OCI-LY7 (cell line): ENCODE measurements at regions of chr7 and their contacts with region 1.

Region 1: DNA sequence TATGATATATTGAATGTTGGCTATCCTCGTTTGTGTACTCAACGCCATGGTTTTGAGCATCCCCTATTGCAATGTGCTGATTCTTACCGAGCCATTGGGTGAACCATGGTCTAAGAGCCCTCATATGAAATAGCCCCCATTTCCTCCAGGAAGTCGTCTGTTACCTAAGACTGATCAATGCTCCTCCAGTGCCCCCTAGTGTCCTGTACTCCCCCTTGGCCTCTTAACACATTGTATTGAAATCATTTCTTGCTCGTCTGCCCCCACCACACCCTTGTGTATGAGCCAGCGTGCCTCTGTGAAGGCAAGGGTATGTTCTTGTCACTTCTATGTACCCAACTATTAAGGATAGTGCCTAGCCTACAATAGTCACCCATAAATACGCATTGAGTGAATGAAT is 11.2 kb upstream of the SLC35B4 start:
- DNase-seq: peak; percentile 84
- H3K4me3 ChIP-seq: no peak overlapping the region
- H3K27ac ChIP-seq: no peak overlapping the region
- H3K4me1 ChIP-seq: no peaks in the 10 kb centered on the region
- CTCF ChIP-seq: peak; percentile 91

Region 2: DNA sequence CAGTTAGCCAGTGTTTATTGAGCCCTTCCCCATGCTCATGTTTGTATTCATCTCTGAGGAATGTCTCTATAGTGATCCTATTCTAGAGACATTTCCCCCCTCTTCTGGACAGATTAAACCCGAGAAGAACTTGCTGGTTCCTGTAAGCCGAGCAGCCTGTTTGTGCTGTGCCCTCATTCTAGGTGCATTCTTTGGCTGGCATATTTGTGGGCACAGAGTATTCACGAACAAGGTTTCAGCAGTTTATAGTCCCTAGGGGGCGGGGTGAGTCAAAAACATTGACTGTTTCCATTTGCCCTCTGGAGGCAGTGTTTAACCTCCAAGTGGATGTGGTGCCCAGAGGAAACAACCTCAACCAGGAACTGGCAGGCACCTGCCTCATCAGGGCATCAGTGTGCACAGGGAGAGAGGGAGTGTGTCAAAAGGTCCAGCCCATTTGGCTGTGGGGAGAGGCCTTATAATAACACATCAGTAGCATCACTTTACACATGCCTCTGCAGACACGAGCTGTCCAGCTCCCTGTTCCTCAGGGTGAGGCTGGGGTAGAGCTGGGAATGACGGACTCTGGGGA is 474.1 kb before region 1 on chr7:
- CTCF ChIA-PET with region 1: interaction called, 3 read pairs
- POLR2A ChIA-PET with region 1: no interaction called
- intact Hi-C with region 1: loop called (anchors 10 kb)
- DNase-seq: peak; percentile 63
- H3K4me3 ChIP-seq: no peak overlapping the region
- H3K27ac ChIP-seq: no peak overlapping the region
- H3K4me1 ChIP-seq: no peaks in the 10 kb centered on the region
- CTCF ChIP-seq: peak; percentile 79

Region 3: DNA sequence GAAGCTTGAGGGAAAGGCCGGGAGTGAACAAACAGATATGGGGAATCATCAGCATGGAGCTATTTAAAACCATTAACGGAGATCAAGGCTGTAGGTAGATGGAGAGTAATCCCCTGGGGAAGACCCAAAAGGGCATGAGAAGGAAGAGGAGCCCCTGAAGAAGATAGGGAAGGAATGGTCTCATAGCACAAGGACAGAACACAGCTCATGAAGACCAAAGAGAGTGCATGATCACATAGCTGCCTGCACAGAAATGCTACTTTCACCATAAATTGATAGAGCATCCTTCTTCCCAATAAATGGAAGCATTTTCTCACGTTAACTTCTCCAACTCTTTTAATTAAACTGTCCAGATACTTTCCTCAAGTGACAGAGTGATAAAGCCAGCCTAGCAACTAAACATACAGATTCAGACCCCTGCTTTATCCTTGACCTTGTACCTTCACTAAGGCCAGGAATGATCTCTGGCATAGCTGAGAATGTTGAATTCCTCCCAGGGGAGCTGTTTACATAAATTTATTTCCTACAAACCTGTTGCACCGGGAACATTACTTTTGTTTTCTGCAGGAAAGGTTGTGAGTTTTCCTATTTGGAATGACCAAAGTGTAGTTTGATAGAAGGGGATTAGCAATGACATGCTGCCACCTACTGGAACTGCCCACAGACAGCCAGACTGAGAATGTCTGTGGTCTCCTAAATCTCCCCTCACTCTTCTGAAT is 311.5 kb before region 1 on chr7:
- CTCF ChIA-PET with region 1: no interaction called
- POLR2A ChIA-PET with region 1: no interaction called
- intact Hi-C with region 1: loop called (anchors 5 kb)
- DNase-seq: peak; percentile 17
- H3K4me3 ChIP-seq: no peak overlapping the region
- H3K27ac ChIP-seq: no peak overlapping the region
- H3K4me1 ChIP-seq: no peaks in the 10 kb centered on the region
- CTCF ChIP-seq: peak; percentile 86

Region 4: DNA sequence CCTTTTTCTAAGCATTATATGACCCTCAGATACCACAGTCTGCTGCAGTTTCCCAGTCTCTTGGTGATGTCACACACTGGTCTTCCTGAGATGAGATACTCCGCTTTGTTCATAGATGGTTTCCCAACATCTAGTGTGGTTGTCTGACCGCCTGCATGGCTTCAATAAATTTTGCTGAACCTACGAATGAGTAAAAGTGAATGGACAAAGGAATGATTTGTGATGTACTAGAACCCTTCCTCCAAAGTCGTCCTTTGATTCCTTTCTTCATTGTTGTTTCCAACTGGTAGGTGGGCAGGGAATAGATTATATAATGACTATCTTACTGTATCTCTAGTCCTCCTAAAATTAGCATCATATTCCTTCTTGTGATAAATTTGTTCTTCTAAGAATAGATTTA is 93.7 kb before region 1 on chr7:
- CTCF ChIA-PET with region 1: no interaction called
- POLR2A ChIA-PET with region 1: no interaction called
- intact Hi-C with region 1: no loop called
- DNase-seq: no peak
- H3K4me3 ChIP-seq: no peak overlapping the region
- H3K27ac ChIP-seq: no peak overlapping the region
- H3K4me1 ChIP-seq: no peaks in the 10 kb centered on the region
- CTCF ChIP-seq: no peak

Region 5: GRCh38 chr7:134432296-134433152 is 104.6 kb after region 1 on chr7:
- CTCF ChIA-PET with region 1: no interaction called
- POLR2A ChIA-PET with region 1: no interaction called
- intact Hi-C with region 1: no loop called
- DNase-seq: peak; percentile 79
- H3K4me3 ChIP-seq: peak overlapping the region; percentile 29
- H3K27ac ChIP-seq: no peak overlapping the region
- H3K4me1 ChIP-seq: peaks cover 8% of the 10 kb centered on the region
- CTCF ChIP-seq: peak; percentile 85

Region 6: GRCh38 chr7:134613623-134614347 is 285.9 kb after region 1 on chr7:
- CTCF ChIA-PET with region 1: no interaction called
- POLR2A ChIA-PET with region 1: no interaction called
- intact Hi-C with region 1: no loop called
- DNase-seq: no peak
- H3K4me3 ChIP-seq: no peak overlapping the region
- H3K27ac ChIP-seq: no peak overlapping the region
- H3K4me1 ChIP-seq: no peaks in the 10 kb centered on the region
- CTCF ChIP-seq: no peak